ENCODE measurements at regions of chr5 and their contacts with region 1.

Region 1: DNA sequence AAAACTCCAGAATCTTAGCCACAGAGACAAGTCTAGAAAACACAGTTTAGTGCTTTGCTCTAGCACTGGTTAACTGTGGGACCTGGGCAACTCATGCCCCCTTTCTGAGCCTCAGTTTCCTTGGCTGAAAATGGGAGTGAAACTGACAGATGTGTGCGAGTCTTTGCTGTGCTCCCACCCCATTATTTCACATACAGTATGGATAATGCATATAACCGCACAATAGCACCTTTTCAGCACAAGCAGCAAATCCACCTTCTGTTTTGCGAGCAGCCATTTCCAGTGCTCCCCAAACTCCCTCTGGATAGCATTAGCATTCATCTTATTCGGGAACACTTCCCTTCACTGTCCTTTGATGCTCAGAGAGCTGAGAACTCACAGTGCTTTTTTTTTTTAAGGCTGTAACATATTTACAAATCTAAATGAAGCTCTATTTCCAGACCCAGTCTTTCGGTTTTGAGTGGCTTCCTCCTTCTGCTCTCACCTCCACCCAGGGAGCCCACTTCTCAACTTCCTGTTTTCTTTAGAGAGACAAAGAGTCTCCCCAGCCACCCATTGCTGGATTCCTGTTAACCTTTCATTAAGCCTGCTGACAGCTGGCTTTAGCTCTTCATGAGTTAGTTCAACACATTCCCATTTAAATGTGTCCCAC is 49.2 kb downstream of the TIMD4 start:
- DNase-seq: peak; percentile 64
- ATAC-seq: peak; percentile 92
- H3K4me3 Mint-ChIP-seq: peak overlapping the region; percentile 66
- H3K27ac Mint-ChIP-seq: peak overlapping the region; percentile 95
- H3K4me1 Mint-ChIP-seq: peaks cover 64% of the 10 kb centered on the region
- H3K27me3 Mint-ChIP-seq: no peaks in the 10 kb centered on the region

Region 2: GRCh38 chr5:156929366-156929948 is 15.6 kb after region 1 on chr5:
- CTCF ChIA-PET with region 1: interaction called, 44 read pairs
- POLR2A ChIA-PET with region 1: interaction called, 5 read pairs
- DNase-seq: no peak
- ATAC-seq: peak; percentile 63
- H3K4me3 Mint-ChIP-seq: no peak overlapping the region
- H3K27ac Mint-ChIP-seq: peak overlapping the region; percentile 89
- H3K4me1 Mint-ChIP-seq: peaks cover 86% of the 10 kb centered on the region
- H3K27me3 Mint-ChIP-seq: no peaks in the 10 kb centered on the region

Region 3: GRCh38 chr5:156934450-156935211 is 20.8 kb after region 1 on chr5:
- CTCF ChIA-PET with region 1: interaction called, 44 read pairs
- POLR2A ChIA-PET with region 1: interaction called, 3 read pairs
- DNase-seq: peak; percentile 82
- ATAC-seq: peak; percentile 57
- H3K4me3 Mint-ChIP-seq: peak overlapping the region; percentile 18
- H3K27ac Mint-ChIP-seq: peak overlapping the region; percentile 41
- H3K4me1 Mint-ChIP-seq: peaks cover 82% of the 10 kb centered on the region
- H3K27me3 Mint-ChIP-seq: no peaks in the 10 kb centered on the region

Measured in activated CD8-positive, alpha-beta T cell treated with anti-CD3 and anti-CD28 coated beads, Interleukin-2, amount 10 ng/mL, durations not matched to agents 7 days and 5 days (primary cell).